OCI-LY7 (cell line): ENCODE measurements at regions of chr17 and their contacts with region 1.

Region 1: GRCh38 chr17:76523084-76524037 is 14.1 kb downstream of the CYGB start:
- DNase-seq: peak; percentile 85
- H3K4me3 ChIP-seq: no peak overlapping the region
- H3K27ac ChIP-seq: no peak overlapping the region
- H3K4me1 ChIP-seq: peaks cover 31% of the 10 kb centered on the region
- CTCF ChIP-seq: peak; percentile 100

Region 2: DNA sequence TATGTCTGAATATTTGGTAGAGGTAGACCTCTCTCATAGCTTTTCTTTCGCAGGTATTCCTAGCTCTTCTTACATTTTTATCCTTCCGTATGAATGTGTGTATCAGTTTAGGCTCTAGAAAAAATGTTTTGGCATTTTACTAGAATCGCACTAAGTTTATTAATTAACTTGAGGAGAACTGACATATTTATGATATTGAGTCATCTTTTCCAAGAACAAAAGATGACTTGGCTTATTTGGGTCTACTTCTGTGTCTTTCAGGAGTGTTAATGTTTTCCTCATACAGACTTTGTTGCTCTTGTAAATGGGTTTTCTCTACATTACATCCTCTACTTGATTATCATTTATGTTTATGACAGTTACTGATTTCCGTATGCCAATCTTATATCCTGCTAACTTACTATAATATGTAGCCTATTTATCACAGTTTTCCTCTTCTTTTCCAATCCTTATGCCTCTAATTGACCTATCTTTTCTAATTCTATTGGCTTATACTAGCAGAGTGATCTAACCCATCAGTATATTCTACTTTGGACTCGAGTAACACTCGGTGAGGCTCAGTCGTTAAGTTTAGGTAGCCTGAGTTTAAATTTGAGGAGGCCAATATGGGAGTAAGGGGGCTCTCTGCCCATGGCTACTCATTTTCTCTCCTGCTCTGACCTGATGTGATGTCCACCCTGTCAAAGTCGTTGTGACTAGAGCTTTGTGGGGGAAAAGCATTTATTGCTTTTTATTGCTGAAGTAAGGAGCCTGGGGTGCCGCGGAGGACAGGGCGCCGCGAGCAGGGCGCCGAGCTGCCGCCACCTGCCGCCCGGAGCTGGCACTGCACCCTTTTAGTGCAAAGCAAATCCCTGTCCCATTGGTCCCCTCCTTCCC is 100.1 kb after region 1 on chr17:
- CTCF ChIA-PET with region 1: no interaction called
- POLR2A ChIA-PET with region 1: interaction called, 3 read pairs
- intact Hi-C with region 1: loop called (anchors 1 kb)
- DNase-seq: peak; percentile 75
- H3K4me3 ChIP-seq: no peak overlapping the region
- H3K27ac ChIP-seq: no peak overlapping the region
- H3K4me1 ChIP-seq: peaks cover 4% of the 10 kb centered on the region
- CTCF ChIP-seq: peak; percentile 99

Region 3: GRCh38 chr17:76681222-76682137 is 158.1 kb after region 1 on chr17:
- CTCF ChIA-PET with region 1: no interaction called
- POLR2A ChIA-PET with region 1: no interaction called
- intact Hi-C with region 1: loop called (anchors 1 kb)
- DNase-seq: peak; percentile 83
- H3K4me3 ChIP-seq: no peak overlapping the region
- H3K27ac ChIP-seq: no peak overlapping the region
- H3K4me1 ChIP-seq: no peaks in the 10 kb centered on the region
- CTCF ChIP-seq: peak; percentile 98